Left ventricle myocardium inferior (tissue), 1 donor: ENCODE measurements at regions of chr19 and their contacts with region 1.

Region 1: DNA sequence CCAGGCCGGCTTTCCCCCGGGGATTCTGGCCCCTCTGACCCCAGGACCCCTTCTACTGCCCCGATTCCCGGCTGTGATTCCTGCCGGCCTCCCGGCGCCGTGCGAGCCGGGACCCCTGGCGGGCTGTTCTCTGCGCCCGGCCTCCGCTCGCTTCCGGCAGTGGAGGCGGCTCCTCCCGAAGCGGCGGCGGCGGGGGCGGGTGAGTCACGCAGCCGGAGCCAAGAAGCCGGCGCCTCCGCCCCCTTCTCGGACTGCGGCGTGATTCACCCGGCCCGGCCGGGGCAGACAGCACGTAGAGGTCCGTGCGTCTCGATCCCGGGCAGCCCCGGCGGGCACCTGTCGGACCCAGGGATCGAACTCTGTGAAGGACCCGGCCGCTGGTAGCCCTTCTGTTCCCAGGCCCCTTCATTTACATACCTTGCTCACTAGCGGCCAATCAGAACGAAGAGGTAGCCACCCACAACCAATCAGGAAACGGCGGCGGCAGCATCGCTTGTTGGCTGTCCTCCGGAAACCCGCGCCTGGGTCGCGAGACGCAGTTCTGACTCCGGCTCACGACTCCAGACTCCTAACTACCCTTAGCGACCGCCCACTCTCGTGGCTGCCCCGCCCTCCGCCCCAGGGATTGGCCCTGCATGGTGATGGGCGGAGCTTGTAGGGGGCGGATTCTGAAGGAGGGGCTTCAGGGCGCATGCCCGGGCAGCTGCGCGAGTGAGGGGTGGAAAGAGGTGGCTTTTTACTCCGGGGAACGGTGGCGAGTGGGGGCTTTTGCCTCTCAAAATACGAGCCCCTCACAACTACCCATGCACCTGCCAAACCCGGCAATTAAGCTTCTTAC is at the start of gene SERTAD1:
- DNase-seq: peak; percentile 100
- H3K4me3 ChIP-seq: peak within 1 kb of the TSS; percentile 97
- H3K27ac ChIP-seq: peak within 1 kb of the TSS; percentile 99
- H3K4me1 ChIP-seq: peaks cover 56% of the 10 kb centered on the region
- H3K27me3 ChIP-seq: no peaks in the 10 kb centered on the region
- CTCF ChIP-seq: peak; percentile 84
- total RNA-seq, gene SERTAD1: 9.2 TPM

Region 2: DNA sequence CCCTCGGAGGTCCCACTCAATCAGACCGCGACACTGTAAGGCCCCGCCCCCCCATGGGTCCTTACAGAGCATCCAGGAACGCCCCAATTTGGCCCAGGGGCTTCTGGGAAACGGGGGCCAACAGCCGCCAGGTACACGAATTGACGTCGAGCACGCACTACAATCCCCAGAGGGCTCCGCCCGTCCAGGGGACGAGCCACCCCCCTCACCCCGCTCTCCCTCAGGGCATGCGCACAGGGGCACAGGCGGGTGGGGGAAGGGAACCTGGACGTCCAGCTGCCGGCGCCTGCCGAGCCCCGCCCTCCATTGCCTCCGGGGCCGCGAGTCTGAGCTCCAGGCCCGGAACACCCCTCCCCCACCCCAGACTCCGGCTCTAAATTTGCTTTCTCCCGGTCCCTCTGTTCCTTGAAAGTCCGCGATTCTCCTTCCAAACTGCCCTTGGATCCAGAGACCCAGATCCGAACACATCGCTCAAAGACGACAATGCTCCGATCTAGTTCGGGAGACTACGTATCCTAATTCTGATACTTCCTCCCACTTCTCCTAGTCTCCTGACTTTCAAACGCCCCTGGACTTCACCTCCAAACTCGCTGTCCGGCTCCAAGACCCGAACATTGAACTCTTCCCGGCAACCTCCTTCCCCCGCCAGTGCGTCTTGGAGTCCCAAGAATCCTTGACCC is 17.6 kb after region 1 on chr19:
- intact Hi-C with region 1: loop called (anchors 1 kb)
- DNase-seq: peak; percentile 100
- H3K4me3 ChIP-seq: peak overlapping the region; percentile 99
- H3K27ac ChIP-seq: peak overlapping the region; percentile 99
- H3K4me1 ChIP-seq: peaks cover 47% of the 10 kb centered on the region
- H3K27me3 ChIP-seq: no peaks in the 10 kb centered on the region
- CTCF ChIP-seq: no peak